Endothelial cell of umbilical vein (primary cell): ENCODE measurements at regions of chr12 and their contacts with region 1.

Region 1: GRCh38 chr12:115354007-115354452 is 670.1 kb upstream of the TBX3 start:
- DNase-seq: peak; percentile 89
- H3K4me3 ChIP-seq: peak overlapping the region in 2 of 3 experiments; percentile 32 to 37
- H3K27ac ChIP-seq: peak overlapping the region; percentile 15
- H3K4me1 ChIP-seq: no peaks in the 10 kb centered on the region
- H3K27me3 ChIP-seq: no peaks in the 10 kb centered on the region
- CTCF ChIP-seq: no peak
- POLR2A ChIP-seq: peak; percentile 49

Region 2: GRCh38 chr12:114684098-114684869 is 669.7 kb before region 1 on chr12 and contains the start of gene TBX3:
- CTCF ChIA-PET with region 1: no interaction called
- POLR2A ChIA-PET with region 1: interaction called, 3 read pairs
- dilution Hi-C with region 1: no loop called
- intact Hi-C with region 1: loop called (anchors 10 kb)
- DNase-seq: peak; percentile 95
- H3K4me3 ChIP-seq: peak within 1 kb of the TSS; percentile 28 to 58 (median 44)
- H3K27ac ChIP-seq: no peak within 1 kb of the TSS
- H3K4me1 ChIP-seq: no peaks in the 10 kb centered on the region
- H3K27me3 ChIP-seq: peaks cover 43 to 46% of the 10 kb centered on the region in 2 experiments
- CTCF ChIP-seq: peak; percentile 34 to 53
- POLR2A ChIP-seq: no peak
- total RNA-seq, gene TBX3: 1.1 and 2.0 TPM in 2 replicates